HEK293T (cell line): ENCODE measurements at regions of chr3 and their contacts with region 1.

Region 1: DNA sequence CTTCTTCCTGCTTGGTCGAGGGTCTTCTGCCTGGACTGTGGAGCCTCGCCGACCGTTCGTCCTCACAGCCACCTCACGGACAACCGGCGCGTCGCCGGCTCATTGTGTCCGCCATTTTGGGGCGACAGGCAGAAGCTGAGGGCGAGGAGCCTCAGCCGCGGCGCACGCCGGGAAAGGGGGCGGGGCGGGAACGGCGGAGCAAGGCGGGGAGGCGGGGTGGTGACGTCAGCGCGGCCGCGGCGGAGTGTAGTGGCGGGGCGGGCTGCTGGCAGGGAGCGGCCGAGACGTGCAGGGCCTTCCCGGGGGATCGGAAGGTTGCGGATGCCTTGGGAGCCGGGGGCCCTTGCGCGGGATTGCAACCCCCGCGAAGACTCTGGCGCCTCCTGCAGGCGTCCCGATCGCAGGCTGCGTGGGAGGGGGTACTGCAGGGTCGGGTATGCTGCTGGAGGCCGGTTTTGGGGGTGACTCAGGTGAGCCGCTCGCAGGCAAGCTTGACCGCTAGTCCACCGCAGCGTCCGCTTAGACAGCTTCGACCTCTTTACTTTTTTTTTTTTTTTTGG is at the start of gene WDR82:
- DNase-seq: peak; percentile 96

Region 2: DNA sequence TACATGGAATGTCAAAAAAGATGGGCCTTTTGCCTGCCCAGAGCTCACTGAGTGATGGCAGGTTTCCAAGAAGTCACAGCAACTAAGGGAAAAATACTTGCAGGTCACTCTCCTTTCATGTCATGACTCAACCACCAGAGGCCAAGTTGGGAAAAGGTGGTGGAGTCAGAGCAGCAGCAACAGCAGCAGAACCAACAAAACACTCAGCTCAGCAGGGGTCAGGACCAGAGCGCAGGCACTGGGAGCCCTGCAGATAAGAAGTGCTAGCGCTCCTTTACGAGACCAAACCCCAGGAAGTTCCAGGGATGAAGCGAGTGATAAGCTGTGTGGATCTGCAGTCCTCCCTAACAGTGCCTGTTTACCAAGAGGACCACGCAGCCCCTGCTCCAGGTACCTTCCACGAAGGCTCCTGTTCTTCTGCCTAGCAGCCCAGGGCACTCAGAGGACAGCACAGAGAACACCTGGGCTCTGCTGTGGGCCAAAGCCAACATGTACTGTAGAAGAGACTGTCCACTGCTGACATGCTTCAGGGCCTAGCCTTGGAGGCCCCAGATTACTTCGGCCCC is 150.4 kb before region 1 on chr3:
- CTCF ChIA-PET with region 1: no interaction called
- POLR2A ChIA-PET with region 1: no interaction called
- DNase-seq: peak; percentile 66

Region 3: DNA sequence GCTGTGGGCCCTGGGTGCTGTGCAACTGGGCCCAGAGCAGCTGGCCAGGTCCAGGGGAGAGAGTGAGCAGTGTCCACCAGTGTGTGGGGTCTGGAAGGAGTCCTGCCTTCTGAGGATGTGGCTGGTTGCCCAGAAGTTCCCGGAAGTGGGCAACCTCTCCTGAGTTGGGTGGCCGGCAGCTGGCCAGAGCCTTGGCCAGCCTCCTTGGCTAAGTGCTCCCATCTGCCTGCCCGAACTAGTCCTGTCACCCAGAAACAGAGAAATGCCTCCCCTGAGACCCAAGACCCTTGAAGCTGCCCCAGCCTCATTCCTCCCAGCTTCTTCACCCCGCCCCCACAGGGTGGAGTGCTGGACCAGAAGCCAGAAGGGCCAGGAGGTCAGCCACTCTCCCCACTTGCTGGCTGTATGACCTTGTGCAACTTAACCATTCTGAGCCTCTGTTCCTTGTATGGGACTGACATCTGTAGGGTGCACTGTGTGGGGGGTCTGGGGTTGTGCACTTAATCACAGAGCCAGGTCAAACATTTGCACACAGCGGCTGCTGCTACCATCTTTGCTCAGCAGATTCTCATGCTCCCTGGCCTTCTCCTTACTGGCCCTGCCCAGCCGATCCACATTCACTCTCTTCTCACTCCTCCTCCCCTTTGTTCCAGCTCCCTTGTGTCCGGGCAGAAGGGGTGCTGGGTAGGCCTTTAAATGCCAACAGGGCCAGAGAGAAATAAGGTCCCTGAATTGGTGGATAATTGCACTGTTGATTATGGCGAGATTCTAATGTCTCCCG is 88.1 kb before region 1 on chr3:
- CTCF ChIA-PET with region 1: no interaction called
- POLR2A ChIA-PET with region 1: no interaction called
- DNase-seq: no peak

Region 4: DNA sequence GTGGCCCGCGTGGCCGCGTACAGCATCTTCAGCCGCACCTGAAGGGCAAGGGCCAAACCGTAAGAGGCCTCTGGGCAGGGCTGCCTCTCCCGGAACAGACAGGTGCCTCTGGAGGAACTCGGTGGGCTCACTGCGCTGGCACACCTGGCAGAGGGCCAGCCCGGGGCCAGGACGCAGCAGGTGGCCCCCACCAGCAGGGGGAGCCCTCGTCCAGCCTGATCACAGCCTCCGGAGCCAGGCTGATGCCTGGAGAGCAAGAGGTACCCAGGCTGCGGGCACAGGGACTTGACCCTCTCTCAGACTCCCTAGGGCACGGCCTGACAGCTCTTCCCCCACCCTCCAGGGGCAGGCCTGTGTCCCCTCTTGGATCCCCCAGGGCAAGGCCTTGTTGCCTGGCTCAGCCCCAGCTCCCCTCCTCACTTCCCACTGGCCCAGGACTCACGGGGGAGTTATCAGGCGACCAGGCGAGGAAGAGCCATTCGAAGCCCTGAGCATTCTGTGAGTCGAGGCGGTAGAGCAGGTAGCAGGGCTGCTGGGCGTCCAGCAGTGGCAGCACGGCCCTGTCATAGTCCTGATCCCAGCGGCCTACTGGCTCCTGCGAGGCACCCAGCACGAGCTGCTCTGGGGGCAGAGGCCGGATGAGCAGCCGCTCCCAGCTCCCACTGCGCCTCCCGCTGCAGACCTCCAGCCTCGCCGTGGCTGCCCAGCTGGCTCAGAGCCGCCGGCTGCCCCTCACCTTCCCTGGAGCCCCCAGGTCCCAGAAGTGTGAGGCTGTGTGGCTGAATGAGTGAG is 46.9 kb before region 1 on chr3:
- CTCF ChIA-PET with region 1: interaction called, 10 read pairs
- POLR2A ChIA-PET with region 1: interaction called, 5 read pairs
- DNase-seq: peak; percentile 81

Region 5: DNA sequence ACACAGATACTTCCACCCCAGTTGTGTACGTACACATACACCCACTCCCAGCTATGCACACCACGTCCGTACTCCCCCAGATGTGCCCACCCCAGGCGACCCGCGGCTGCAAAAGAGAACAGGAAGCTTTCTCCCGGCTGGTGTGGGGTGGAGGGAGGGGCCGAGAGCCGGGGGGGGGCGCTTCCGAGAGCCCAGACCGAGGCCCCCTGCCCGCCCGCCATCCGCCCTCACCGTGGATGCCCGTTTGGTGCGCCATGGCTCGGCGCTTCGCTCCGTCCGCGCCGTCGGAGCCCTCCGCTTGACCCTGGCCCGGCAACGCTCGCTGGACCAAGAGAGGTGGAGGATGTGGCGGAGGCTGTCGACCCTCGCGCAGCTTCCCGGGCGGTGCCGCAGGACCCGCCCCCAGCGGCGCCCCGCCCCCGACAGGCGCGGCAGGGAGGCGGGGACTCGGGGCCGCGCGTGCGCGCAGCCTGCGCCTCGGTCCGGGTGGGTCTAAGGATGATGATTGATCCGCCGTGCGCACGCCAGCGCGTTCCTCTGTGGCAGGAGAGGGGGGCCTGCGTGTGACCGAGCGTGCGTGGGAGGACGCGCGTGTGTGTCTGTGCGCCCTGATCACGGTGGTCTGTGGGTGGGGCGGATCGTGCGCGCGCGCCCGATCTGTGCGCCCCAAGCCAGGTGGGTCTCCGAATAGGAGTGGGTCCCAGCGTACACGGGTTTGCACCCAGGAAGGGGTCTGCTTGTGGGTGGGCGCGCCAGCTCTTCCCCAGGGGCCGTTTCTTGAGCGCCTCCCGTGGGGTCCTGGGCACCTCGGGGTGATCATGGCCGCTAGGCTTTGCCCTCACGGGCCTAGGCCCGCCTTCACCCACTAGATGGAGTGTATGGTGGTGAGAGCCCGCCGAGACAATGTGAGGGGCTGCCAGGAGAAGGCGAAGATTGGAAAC is 39.6 kb before region 1 on chr3 and contains the start of gene TWF2:
- CTCF ChIA-PET with region 1: no interaction called
- POLR2A ChIA-PET with region 1: interaction called, 36 read pairs
- DNase-seq: peak; percentile 96